Sciatic nerve (tissue), 2 donors: ENCODE measurements at regions of chr10 and their contacts with region 1.

Region 1: GRCh38 chr10:58873161-58873560 is 303.3 kb upstream of the PHYHIPL start:
- DNase-seq: no peak
- ATAC-seq: no peak

Region 2: DNA sequence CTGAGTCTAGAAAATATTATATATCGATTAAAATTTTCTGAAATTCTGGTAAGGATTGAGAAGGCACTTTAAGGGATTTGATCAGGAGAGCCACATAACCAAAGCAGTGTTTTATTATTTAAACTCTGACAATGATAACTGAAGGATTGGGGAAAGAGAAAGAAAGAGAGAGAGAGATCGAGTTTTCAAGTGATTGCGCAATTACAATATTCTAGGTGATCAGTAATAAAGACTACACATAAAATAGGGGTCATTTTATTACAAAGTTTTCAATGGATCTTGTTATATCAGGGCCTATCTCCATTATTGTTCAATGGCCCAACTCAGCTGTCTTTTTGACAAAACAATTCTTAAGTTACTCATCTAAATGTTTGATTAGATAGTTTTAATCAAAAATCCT is 1970.6 kb before region 1 on chr10:
- intact Hi-C with region 1: no loop called
- DNase-seq: no peak
- ATAC-seq: no peak

Region 3: DNA sequence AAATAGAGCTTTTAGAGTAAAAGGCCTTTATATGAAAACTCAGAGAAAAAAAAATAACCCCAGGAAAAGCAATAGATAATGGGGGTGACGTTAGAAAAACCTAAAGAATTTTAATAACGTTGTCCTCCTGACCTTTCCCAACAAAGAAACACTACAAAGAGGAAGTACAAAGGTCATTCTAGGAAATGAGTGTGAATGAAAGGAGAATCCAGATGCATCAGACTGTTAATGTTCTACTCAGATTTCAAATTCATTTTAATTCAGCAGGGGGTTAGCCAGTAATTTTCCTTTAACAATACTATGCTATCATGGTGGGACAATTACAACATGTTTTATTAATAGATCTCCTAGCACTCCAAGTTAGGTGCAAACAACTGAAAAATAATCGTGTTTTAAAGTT is 1831.3 kb after region 1 on chr10:
- intact Hi-C with region 1: loop called (anchors 5 kb)
- DNase-seq: no peak
- ATAC-seq: no peak